Activated CD8-positive, alpha-beta memory T cell treated with anti-CD3 and anti-CD28 coated beads, Interleukin-2, amount 10 ng/mL, durations not matched to agents 7 days and 5 days (primary cell): ENCODE measurements at regions of chr14 and their contacts with region 1.

Region 1: GRCh38 chr14:74612350-74613021 is 449 bp upstream of the LTBP2 start:
- DNase-seq: peak; percentile 83
- ATAC-seq: peak; percentile 88
- H3K4me3 Mint-ChIP-seq: peak overlapping the region; percentile 51
- H3K27ac Mint-ChIP-seq: no peak overlapping the region
- H3K4me1 Mint-ChIP-seq: peaks cover 20% of the 10 kb centered on the region
- H3K27me3 Mint-ChIP-seq: peaks cover 57% of the 10 kb centered on the region

Region 2: GRCh38 chr14:74483321-74483720 is 129.2 kb before region 1 on chr14:
- CTCF ChIA-PET with region 1: no interaction called
- DNase-seq: no peak
- ATAC-seq: no peak
- H3K4me3 Mint-ChIP-seq: no peak overlapping the region
- H3K27ac Mint-ChIP-seq: no peak overlapping the region
- H3K4me1 Mint-ChIP-seq: no peaks in the 10 kb centered on the region
- H3K27me3 Mint-ChIP-seq: no peaks in the 10 kb centered on the region

Region 3: DNA sequence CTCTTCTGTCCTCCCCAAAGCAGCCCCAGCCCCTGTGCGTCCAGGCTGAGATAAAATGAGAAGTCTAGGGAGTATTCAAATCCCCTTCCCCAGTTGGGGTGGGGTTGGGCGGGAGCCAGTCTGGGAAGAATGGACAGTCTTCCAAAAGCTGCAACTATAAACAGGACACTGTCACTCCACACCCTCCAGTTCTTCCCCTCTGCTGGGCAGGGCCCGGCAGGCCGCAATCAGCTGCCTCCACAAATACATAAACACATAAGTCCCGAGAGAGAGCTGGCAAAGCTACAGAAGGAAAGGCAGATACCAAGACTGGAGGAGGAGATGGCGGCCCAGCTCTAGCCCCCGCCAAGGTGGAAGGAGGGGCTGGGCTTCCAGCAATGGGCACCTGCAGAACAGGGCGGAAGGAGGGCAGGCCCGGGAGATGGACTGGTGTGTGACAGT is 13.1 kb before region 1 on chr14:
- CTCF ChIA-PET with region 1: interaction called, 17 read pairs
- DNase-seq: no peak
- ATAC-seq: no peak
- H3K4me3 Mint-ChIP-seq: no peak overlapping the region
- H3K27ac Mint-ChIP-seq: no peak overlapping the region
- H3K4me1 Mint-ChIP-seq: no peaks in the 10 kb centered on the region
- H3K27me3 Mint-ChIP-seq: peaks cover 10% of the 10 kb centered on the region

Region 4: GRCh38 chr14:74641601-74642391 is 29.3 kb after region 1 on chr14:
- CTCF ChIA-PET with region 1: interaction called, 68 read pairs
- DNase-seq: no peak
- ATAC-seq: no peak
- H3K4me3 Mint-ChIP-seq: no peak overlapping the region
- H3K27ac Mint-ChIP-seq: no peak overlapping the region
- H3K4me1 Mint-ChIP-seq: no peaks in the 10 kb centered on the region
- H3K27me3 Mint-ChIP-seq: peaks cover 23% of the 10 kb centered on the region

Region 5: GRCh38 chr14:74762917-74763802 is 150.7 kb after region 1 on chr14 and contains the start of gene YLPM1:
- CTCF ChIA-PET with region 1: interaction called, 21 read pairs
- DNase-seq: peak; percentile 95
- ATAC-seq: peak; percentile 94
- H3K4me3 Mint-ChIP-seq: peak within 1 kb of the TSS; percentile 95
- H3K27ac Mint-ChIP-seq: peak within 1 kb of the TSS; percentile 88
- H3K4me1 Mint-ChIP-seq: peaks cover 39% of the 10 kb centered on the region
- H3K27me3 Mint-ChIP-seq: no peaks in the 10 kb centered on the region
- total RNA-seq, gene YLPM1: 57.9 to 64.1 TPM

Region 6: DNA sequence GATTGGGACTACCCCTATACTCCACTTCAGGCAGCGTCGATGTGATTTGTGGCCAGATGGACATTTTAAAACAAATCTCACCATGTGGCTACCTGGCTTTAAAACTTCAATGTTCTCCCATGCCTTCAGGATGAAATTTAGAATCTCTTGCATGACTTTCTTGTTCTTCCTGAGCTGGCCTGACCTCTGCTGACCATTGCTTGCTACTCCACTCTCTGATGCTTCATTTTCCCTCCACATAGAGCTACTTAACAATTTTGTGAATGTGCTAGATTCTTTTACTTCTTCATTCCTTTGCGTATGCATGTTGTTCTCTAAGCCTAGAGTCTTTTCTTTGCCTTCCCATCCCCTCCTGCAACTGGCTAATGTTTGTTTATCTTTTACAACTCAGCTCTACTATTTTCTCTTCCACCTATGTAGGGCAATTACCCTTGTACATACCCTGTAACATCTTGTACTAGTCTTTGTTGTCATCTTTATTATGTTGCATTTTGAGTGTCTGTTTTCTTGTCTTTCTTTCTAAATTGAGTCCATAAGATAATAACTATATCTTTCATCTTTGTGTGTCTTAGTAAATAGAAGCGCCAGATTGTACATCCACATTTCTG is 191.8 kb after region 1 on chr14:
- CTCF ChIA-PET with region 1: interaction called, 115 read pairs
- DNase-seq: peak; percentile 57
- ATAC-seq: no peak
- H3K4me3 Mint-ChIP-seq: no peak overlapping the region
- H3K27ac Mint-ChIP-seq: no peak overlapping the region
- H3K4me1 Mint-ChIP-seq: no peaks in the 10 kb centered on the region
- H3K27me3 Mint-ChIP-seq: no peaks in the 10 kb centered on the region

Region 7: GRCh38 chr14:74860906-74861733 is 248.6 kb after region 1 on chr14:
- CTCF ChIA-PET with region 1: interaction called, 12 read pairs
- DNase-seq: peak; percentile 93
- ATAC-seq: peak; percentile 94
- H3K4me3 Mint-ChIP-seq: no peak overlapping the region
- H3K27ac Mint-ChIP-seq: no peak overlapping the region
- H3K4me1 Mint-ChIP-seq: peaks cover under 1% of the 10 kb centered on the region
- H3K27me3 Mint-ChIP-seq: no peaks in the 10 kb centered on the region

Region 8: DNA sequence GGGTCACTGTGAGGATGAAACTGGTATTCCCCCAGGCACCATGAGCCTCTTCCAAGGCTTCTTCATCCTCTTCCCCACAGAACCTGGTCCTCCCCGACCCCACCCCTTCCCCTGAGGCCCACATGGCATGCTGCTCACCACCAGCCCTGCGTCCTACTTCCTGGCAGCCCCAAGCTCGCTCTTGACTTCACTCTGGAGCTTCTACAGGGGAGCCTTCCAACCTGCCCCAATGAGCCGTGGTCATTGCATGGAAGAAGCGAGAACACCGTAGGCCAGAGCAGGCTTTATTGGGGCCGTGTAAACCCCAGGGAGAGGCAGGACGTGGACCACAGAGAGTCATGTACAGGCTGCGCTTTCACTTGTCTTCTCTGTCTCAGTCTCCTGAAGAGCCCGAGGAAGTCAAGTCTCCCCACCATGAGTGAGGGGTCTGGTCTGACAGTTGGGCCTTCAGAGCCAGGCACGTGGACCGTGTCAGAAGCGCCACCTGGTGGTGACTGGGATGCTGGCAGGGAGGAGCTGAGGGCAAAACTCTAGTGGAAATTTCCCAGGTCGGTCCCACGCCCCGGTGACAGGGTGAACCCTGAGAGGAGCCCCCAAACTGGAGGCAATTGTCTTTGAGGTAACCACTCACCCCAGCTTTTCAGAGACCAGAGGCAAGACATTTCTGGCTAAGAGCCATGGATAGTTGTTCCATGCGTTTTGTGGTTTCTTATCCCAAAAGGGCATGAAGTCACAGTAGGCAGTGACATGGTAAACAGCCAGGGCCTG is 293.1 kb after region 1 on chr14:
- CTCF ChIA-PET with region 1: interaction called, 32 read pairs
- DNase-seq: peak; percentile 80
- ATAC-seq: peak; percentile 80
- H3K4me3 Mint-ChIP-seq: no peak overlapping the region
- H3K27ac Mint-ChIP-seq: peak overlapping the region; percentile 56
- H3K4me1 Mint-ChIP-seq: no peaks in the 10 kb centered on the region
- H3K27me3 Mint-ChIP-seq: no peaks in the 10 kb centered on the region